ENCODE measurements at regions of chr12 and their contacts with region 1.

Region 1: DNA sequence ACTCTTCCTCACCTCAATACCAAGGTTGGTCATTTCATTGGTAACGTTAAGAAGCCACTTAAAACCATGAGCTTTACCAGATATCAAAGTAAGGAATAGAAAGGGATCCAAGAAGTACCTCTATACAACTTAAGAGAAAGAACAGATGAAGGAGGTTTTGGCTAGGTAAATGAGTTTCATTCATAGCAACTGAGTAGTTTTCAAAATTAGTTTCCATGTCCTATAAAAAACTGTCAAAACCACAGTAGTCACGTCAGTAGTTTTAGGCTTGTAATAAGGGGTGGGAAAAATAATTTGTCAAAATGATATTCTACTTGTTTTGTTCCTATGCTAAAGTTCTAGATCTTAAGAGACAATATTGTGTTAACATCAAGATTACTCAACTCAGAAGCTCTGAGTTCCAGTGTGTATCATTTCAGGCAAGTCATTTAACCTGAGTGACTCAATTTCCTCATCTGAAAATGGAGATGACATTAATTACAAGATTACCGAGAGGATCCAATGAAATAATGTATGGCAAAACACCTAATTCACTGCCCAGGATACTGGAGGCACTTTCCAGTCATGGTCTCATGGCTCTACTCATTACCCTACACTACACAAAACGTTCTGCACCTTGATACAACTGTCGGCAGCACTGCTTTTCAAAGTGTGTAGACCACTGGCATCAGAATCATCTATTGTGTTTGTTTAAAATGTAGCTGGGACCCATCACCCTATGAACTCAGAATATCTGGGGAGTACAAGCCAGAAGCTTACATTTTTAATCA is 24.1 kb upstream of the SLC6A13 start:
- DNase-seq: no peak
- H3K4me3 Mint-ChIP-seq: no peak overlapping the region
- H3K27ac Mint-ChIP-seq: peak overlapping the region; percentile 69
- H3K4me1 Mint-ChIP-seq: peaks cover 22% of the 10 kb centered on the region
- H3K27me3 Mint-ChIP-seq: no peaks in the 10 kb centered on the region

Region 2: GRCh38 chr12:304805-305204 is 18.1 kb after region 1 on chr12:
- intact Hi-C with region 1: loop called (anchors 2 kb)
- DNase-seq: no peak
- H3K4me3 Mint-ChIP-seq: no peak overlapping the region
- H3K27ac Mint-ChIP-seq: no peak overlapping the region
- H3K4me1 Mint-ChIP-seq: peaks cover 32% of the 10 kb centered on the region
- H3K27me3 Mint-ChIP-seq: no peaks in the 10 kb centered on the region